AG04450 (cell line): ENCODE measurements at regions of chr6 and their contacts with region 1.

Region 1: GRCh38 chr6:68544450-68544849 is 90.6 kb upstream of the ADGRB3 start:
- DNase-seq: no peak
- H3K4me3 ChIP-seq: no peak overlapping the region
- H3K27ac ChIP-seq: no peak overlapping the region
- H3K27me3 ChIP-seq: no peaks in the 10 kb centered on the region
- CTCF ChIP-seq: no peak

Region 2: DNA sequence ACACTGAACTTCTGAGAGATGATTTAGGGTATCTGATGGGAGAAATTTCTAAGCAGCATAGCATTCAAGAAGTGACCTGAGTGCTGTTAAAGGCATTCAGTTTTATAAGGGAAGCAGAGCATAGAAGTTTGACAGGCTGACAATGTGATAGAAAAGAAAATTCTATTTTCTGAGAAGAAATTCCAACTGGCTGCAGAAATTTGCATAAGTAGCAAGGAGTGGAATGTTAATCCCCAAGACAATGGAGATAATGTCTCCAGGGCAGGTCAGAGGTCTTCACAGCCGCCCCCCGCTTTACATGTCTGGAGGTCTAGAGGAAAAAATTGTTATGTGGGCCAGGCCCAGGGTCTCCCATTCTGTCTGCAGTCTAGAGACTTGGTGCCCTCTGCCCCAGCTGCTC is 1475.7 kb before region 1 on chr6:
- CTCF ChIA-PET with region 1: interaction called, 10 read pairs
- POLR2A ChIA-PET with region 1: no interaction called
- DNase-seq: no peak
- H3K4me3 ChIP-seq: no peak overlapping the region
- H3K27ac ChIP-seq: no peak overlapping the region
- H3K27me3 ChIP-seq: no peaks in the 10 kb centered on the region
- CTCF ChIP-seq: no peak

Region 3: DNA sequence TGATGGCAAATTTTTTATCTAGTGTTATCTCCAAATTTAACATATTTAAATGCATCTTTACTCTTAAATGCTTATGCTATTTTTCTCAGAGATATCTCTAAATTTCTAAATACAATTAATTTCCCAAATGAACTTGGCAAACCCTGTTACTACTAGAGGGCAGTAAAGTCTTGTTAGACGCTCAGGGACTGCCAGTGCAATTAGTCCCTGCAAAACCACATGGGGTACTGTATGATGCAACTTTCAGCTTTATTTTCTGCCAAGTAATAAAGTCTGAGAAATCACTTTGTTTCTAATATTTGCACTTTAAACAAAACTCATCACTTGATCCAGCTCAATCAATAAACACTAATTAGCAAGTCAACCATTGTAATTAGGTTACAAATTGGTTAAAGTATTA is 14.6 kb after region 1 on chr6:
- CTCF ChIA-PET with region 1: no interaction called
- POLR2A ChIA-PET with region 1: no interaction called
- DNase-seq: no peak
- H3K4me3 ChIP-seq: no peak overlapping the region
- H3K27ac ChIP-seq: no peak overlapping the region
- H3K27me3 ChIP-seq: no peaks in the 10 kb centered on the region
- CTCF ChIP-seq: no peak